ENCODE measurements at regions of chr1 and their contacts with region 1.

Region 1: DNA sequence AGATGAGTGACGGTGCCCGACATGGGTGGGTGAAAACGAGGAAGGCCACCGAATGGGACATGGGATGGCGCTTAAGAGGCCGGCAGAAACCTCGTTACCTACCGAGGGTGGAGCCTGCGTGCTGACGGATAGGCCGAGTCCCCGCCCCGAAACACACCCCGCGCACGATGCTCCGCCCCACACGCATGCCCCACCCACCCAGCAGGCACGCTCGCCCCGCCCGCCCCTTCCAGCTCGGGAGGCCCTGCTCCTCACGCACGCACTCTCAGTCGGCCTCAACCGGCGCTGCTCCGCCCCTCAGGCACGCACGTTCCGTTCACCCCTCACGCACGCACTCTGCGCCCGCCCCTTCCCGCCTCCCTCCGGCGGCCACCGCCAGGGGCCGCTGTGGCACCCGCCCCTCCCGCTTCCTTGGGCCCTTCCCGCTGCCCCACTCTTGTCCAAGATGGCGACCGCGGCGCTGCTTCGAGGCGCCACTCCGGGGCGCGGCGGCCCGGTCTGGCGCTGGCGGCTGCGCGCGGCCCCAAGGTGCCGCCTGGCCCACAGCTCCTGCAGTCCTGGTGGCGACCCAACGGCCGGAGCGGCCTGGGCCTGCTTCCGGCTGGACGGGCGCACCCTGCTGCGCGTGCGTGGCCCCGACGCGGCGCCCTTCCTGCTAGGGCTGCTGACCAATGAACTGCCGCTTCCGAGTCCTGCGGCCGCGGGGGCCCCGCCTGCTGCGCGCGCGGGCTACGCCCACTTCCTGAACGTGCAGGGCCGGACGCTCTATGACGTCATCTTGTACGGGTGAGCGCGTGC is at the start of gene IBA57:
- DNase-seq: peak; percentile 100
- ATAC-seq: peak; percentile 89
- H3K4me3 Mint-ChIP-seq: peak within 1 kb of the TSS; percentile 80
- H3K27ac Mint-ChIP-seq: peak within 1 kb of the TSS; percentile 87
- H3K4me1 Mint-ChIP-seq: peaks cover 35% of the 10 kb centered on the region
- H3K27me3 Mint-ChIP-seq: no peaks in the 10 kb centered on the region
- total RNA-seq, gene IBA57: 6.0 to 8.3 TPM

Region 2: DNA sequence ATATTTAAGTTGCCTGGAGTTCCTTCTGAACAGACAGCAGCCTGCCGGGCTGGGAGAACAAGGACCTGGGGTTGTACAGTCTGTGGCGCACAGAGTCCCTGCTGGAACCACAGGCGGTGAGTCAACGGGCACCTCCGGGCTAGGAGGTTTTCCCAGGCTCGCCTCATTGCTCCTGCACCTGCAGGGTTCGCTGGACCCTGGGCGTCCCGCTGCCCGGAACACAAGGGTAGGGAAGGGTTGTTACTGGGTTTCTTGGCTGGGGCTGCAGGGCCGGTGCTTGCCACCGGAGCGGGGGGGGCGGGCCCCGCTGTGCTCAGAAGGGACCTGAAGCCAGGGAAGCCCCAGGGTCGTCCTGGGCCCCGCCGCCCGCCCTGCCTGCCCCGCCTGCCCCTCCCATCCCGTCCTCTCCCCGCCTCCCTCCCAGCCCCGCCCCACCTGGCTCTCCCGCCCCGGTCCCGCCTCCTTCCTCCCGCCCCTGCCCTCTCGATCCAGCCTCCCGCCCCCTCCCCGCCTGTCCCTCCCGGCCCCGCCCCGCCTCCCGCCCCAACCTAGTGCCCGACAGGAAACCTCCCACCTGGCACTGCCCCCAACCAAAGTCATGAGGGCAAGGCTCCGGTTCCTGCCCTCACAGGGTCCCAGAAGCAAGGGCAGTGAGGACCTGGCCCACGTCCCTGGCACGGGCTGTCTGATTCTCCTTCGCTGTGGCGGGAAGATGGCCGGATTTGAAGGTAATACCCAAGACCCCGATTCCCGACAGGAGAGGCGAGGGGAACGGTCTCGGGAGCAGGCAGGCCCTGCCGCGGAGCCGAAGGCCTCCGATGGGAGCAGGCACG is 437.3 kb before region 1 on chr1:
- CTCF ChIA-PET with region 1: no interaction called
- POLR2A ChIA-PET with region 1: no interaction called
- intact Hi-C with region 1: loop called in 1 of 2 experiments (anchors 1 kb)
- DNase-seq: peak; percentile 89
- ATAC-seq: peak; percentile 62
- H3K4me3 Mint-ChIP-seq: peak overlapping the region; percentile 76
- H3K27ac Mint-ChIP-seq: peak overlapping the region; percentile 81
- H3K4me1 Mint-ChIP-seq: peaks cover 16% of the 10 kb centered on the region
- H3K27me3 Mint-ChIP-seq: peaks cover 3% of the 10 kb centered on the region

Region 3: DNA sequence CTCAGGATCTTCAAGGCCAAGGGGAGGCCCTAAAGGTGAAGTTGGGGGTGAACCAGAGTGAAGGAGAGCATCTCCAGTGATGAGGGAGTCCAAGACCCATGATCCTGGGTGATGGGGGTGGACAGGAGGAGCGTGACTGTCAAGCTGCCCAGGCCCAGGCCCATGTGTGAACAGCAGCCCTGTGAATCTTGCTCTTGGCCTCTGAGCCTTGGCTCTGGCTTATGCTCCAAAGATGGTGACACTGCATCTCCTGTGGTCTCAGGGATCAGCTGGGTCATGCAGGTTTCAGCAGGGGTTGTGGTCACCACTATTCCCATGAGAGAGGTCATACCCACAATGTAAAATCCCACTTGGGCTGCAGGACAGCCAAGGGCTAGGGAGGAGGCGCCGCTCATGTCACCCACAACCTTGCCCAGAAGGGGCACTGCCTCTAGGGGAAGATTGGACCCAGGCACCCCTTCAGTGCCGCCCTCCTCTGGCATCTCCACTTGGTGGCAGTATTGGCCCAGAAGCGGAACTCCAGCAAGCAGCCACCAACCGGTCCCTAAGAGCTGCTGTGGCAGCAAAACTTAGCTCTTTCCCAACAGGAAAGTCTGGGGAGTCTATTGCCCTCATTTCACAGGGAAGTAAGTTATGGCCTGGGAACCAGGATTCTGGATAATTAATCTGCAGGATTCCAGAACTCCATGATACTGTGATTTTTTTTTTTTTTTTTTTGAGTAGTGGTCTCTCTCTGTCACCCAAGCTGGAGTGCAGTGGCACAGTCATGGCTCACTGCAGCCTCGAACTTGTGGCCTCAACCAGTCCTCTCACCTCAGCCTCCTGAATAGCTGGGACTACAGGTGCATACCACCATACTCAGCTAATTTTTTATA is 166.3 kb before region 1 on chr1:
- CTCF ChIA-PET with region 1: interaction called, 10 read pairs
- POLR2A ChIA-PET with region 1: no interaction called
- intact Hi-C with region 1: loop called in 1 of 2 experiments (anchors 5 kb)
- DNase-seq: peak; percentile 87
- ATAC-seq: peak; percentile 98
- H3K4me3 Mint-ChIP-seq: no peak overlapping the region
- H3K27ac Mint-ChIP-seq: no peak overlapping the region
- H3K4me1 Mint-ChIP-seq: no peaks in the 10 kb centered on the region
- H3K27me3 Mint-ChIP-seq: peaks cover 18% of the 10 kb centered on the region

Region 4: DNA sequence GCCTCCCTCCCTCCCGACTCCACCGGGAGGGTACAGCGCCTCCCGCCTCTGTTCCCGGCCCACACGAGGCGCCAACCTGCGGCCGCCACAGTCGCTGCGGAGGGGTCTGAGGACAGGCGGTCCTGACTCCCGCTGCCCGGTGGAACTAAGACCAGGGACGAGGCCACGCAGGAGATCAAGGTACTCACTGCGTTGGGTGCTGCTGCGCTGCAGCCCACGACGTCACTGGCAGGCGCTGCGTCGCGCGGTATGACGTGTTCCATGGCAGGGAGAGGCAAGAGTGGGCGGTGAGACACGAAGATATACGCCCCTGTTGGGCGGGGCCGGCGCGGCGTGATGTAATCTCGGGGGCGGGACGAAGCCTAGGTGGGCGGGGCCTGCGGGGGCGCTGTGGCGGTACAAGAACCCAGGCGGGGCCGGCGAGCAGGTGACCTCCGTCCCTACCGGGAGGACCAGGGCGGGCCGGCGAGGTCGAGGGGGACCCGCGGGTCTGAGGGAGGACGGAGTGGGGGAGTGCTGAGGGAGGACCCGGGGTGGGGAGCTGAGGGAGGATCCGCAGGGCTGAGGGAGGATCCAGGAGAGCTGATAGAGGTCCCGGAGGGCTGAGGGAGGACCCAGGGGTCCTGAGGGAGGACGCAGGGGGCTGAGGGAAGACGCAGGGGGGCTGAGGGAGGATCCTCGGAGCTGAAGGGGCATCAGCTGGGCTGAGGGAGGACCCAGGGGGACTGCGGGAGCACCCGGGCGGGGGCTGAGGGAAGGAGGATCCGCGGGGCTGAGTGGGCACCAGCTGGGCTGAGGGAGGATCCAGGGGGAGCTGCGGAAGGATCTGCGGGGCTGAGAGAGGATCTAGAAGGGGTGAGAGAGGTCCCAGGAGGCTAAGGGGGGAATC is 56.3 kb before region 1 on chr1 and contains the start of gene MRPL55:
- CTCF ChIA-PET with region 1: interaction called, 3 read pairs
- POLR2A ChIA-PET with region 1: interaction called, 3 read pairs
- intact Hi-C with region 1: loop called (anchors 1 kb)
- DNase-seq: peak; percentile 99
- ATAC-seq: peak; percentile 92
- H3K4me3 Mint-ChIP-seq: peak within 1 kb of the TSS; percentile 90
- H3K27ac Mint-ChIP-seq: peak within 1 kb of the TSS; percentile 92
- H3K4me1 Mint-ChIP-seq: peaks cover 21% of the 10 kb centered on the region
- H3K27me3 Mint-ChIP-seq: no peaks in the 10 kb centered on the region
- total RNA-seq, gene MRPL55: 51.0 to 57.7 TPM

Region 5: DNA sequence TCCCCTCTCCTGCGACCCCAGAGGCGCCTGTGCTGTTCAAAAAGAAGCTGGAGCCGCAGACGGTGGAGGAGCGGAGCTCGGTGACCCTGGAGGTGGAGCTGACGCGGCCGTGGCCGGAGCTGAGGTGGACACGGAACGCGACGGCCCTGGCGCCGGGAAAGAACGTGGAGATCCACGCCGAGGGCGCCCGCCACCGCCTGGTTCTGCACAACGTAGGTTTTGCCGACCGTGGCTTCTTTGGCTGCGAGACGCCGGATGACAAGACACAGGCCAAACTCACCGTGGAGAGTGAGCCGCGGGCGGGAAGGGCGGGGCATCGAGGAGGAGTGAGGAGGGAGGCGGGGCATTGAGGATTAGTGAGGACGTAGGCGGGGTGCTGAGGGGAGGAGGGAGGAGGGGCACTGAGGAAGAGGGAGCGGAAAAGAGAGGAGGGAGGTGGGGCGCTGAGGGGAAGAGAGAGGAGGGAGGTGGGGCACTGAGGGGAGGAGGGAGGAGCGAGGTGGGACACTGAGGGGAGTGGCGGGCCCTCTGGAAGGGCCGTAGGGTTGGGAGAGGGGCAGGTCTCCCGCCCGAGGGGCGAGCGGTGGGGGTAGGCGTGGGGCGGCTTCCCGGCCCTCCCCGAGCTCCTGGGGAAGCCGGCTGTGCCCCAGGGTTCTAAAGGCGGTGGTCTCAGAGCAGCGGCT is 110.3 kb after region 1 on chr1:
- CTCF ChIA-PET with region 1: no interaction called
- POLR2A ChIA-PET with region 1: no interaction called
- intact Hi-C with region 1: loop called (anchors 1 to 5 kb)
- DNase-seq: peak; percentile 94
- ATAC-seq: peak; percentile 96
- H3K4me3 Mint-ChIP-seq: peak overlapping the region; percentile 71
- H3K27ac Mint-ChIP-seq: no peak overlapping the region
- H3K4me1 Mint-ChIP-seq: peaks cover 6% of the 10 kb centered on the region
- H3K27me3 Mint-ChIP-seq: no peaks in the 10 kb centered on the region

Region 6: DNA sequence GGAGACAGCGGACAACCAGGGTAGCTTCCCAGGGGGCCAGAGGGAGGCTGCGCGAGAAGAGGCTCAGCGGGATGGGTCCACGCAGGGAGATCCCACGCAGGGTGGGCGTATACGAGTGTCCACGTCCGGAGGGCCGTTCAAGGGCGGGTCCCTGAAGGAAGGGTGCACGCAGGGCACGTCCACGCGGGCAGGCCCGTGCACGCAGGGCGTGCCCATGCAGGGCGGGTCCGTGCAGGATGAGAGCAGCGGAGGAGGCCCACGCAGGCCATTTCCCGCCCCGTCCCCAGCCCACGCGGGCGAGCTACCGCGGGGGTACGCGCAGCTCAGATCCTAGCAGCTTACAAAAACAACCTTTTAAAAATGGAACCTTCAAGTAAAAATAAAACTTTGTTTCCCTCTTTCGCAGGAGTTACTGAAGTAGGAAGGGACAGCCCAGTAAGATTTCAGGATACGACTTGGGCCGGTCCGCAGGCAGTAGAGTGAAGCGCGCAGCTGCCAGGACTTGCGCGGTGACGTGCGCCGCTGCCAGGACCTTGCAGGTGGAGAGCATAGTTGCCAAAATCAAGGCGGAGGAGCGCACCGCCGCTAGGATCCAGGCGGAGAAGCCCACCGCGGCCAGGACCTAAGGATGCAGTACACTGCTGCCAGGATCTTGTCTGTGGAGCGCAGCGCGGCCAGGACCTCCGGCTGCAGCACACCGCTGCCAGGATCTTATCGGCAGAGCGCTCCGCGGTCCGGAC is 321.2 kb after region 1 on chr1:
- CTCF ChIA-PET with region 1: no interaction called
- POLR2A ChIA-PET with region 1: no interaction called
- intact Hi-C with region 1: loop called in 1 of 2 experiments (anchors 1 kb)
- DNase-seq: peak; percentile 87
- ATAC-seq: peak; percentile 66
- H3K4me3 Mint-ChIP-seq: peak overlapping the region; percentile 96
- H3K27ac Mint-ChIP-seq: peak overlapping the region; percentile 99
- H3K4me1 Mint-ChIP-seq: peaks cover 40% of the 10 kb centered on the region
- H3K27me3 Mint-ChIP-seq: no peaks in the 10 kb centered on the region

Measured in activated CD4-positive, alpha-beta T cell treated with anti-CD3 and anti-CD28 coated beads for 36 hours (primary cell).